GM12878 (cell line): ENCODE measurements at regions of chr22 and their contacts with region 1.

Region 1: DNA sequence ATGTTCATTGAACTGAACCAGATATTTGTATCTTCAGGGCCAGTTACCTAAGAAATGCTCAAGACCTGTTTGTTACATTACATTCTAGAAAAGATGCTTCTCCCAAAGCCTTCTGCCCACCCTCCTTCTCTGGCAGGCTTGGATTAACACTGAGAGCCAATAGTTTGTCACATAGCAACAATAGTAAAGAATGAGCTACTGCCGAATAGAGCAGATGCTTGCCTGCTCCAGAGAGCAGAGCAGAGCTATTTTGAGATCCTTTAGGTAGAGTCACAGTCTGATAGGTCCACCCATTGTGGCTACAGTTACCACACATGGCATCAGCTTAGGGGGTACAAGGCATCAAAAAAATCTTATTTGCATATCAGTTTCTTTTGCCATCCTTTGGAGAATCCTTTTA is 13.5 kb upstream of the EP300 start:
- DNase-seq: no peak
- ATAC-seq: peak; percentile 57; the same call in 2 of the 3 replicates
- H3K4me3 ChIP-seq: no peak overlapping the region
- H3K27ac ChIP-seq: no peak overlapping the region
- H3K4me1 ChIP-seq: no peaks in the 10 kb centered on the region
- H3K27me3 ChIP-seq: no peaks in the 10 kb centered on the region
- CTCF ChIP-seq: no peak
- EP300 ChIP-seq: no peak
- POLR2A ChIP-seq: no peak
- RAD21 ChIP-seq: no peak

Region 2: GRCh38 chr22:41015003-41015402 is 63.9 kb before region 1 on chr22:
- CTCF ChIA-PET with region 1: no interaction called
- POLR2A ChIA-PET with region 1: no interaction called
- RAD21 ChIA-PET with region 1: no interaction called
- SMC1A ChIA-PET with region 1: no interaction called
- in situ Hi-C with region 1: loop called (anchors 10 kb)
- intact Hi-C with region 1: no loop called
- DNase-seq: no peak
- ATAC-seq: no peak
- H3K4me3 ChIP-seq: no peak overlapping the region
- H3K27ac ChIP-seq: no peak overlapping the region
- H3K4me1 ChIP-seq: no peaks in the 10 kb centered on the region
- H3K27me3 ChIP-seq: no peaks in the 10 kb centered on the region
- CTCF ChIP-seq: no peak
- EP300 ChIP-seq: no peak
- POLR2A ChIP-seq: no peak
- RAD21 ChIP-seq: no peak